Dendritic cell treated with granulocyte-macrophage colony-stimulating factor and Interleukin-4, amounts not matched to agents 40 ng/mL and 50 ng/mL, for 4 days (primary cell): ENCODE measurements at regions of chr6 and their contacts with region 1.

Region 1: GRCh38 chr6:26363882-26364701 is 906 bp upstream of the BTN3A2 start:
- H3K4me3 Mint-ChIP-seq: peak overlapping the region; percentile 5
- H3K27ac Mint-ChIP-seq: no peak overlapping the region
- H3K4me1 Mint-ChIP-seq: peaks cover 15% of the 10 kb centered on the region
- H3K27me3 Mint-ChIP-seq: no peaks in the 10 kb centered on the region

Region 2: DNA sequence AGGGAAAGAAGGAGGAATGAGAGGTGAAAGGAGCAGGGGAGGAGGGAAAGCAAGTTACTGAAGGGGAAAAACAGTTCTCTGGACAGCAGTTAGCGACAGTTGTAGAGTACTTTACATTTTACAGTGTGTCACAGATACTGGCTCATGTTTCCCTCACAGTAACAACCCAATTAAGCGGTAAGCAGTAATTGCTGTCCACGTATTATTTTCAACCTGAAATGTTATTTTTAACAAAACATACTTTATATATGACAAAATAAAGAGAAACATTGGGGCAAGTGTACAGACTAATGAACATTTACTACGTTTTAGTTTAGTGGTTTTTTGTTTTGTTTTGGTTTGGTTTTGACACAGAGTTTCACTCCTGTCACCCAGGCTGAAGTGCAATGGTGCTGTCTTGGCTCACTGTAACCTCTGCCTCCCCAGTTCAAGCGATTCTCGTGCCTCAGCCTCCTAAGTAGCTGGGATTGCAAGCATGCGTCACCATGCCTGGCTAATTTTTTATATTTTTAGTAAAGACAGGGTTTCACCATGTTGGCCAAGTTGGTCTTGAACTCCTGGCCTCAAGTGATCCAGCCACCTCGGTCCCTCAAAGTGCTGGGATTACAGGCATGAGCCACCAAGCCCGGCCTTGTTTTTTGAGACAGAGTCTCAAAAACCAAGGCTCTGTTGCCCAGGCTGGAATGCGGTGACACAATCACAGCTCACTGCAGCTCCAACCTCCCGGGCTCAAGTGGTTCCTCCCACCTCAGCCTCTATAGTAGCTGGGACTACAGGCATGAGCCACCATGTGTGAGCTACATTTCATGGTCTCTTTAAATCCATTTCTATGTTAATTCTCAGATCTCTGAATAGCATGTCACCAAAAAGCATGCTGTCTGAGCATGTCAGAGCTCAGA is 21.7 kb before region 1 on chr6:
- intact Hi-C with region 1: no loop called
- H3K4me3 Mint-ChIP-seq: no peak overlapping the region
- H3K27ac Mint-ChIP-seq: peak overlapping the region; percentile 5
- H3K4me1 Mint-ChIP-seq: peaks cover 20% of the 10 kb centered on the region
- H3K27me3 Mint-ChIP-seq: peaks cover 14% of the 10 kb centered on the region

Region 3: GRCh38 chr6:26383624-26384417 is 19.7 kb after region 1 on chr6:
- intact Hi-C with region 1: loop called (anchors 2 kb)
- H3K4me3 Mint-ChIP-seq: peak overlapping the region; percentile 94
- H3K27ac Mint-ChIP-seq: peak overlapping the region; percentile 93
- H3K4me1 Mint-ChIP-seq: peaks cover 67% of the 10 kb centered on the region
- H3K27me3 Mint-ChIP-seq: no peaks in the 10 kb centered on the region

Region 4: DNA sequence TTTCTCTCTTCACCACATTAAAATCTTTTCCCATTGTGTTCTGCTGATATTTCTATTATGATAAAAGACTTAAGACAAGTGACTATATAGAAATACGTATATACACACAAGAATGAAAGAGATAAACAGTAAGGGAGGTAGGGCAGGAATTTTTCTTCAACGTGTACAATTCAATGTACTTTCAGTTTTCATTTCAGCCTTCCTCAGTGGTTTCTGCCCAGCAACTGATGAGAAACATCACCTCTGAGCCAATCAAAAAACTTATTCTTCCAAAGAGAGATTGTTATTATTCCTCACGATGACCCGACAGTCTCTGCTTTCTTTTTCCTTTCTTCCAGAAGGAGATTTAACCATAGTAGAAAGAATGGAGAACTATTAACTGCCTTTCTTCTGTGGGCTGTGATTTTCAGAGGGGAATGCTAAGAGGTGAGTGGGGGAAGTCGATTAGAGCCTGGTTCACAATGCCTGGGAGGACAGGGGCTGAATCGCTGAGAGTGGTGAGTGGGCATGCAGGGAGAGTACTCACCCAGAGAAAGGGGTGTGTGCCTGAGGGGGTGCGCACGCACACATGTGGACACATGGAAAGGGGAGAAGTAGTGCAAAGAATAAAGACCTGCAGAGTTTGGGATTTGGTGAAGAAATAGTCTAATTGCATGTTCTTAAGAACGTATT is 38.0 kb after region 1 on chr6 and contains the start of gene BTN3A1:
- intact Hi-C with region 1: loop called (anchors 2 kb)
- H3K4me3 Mint-ChIP-seq: peak within 1 kb of the TSS; percentile 84
- H3K27ac Mint-ChIP-seq: peak within 1 kb of the TSS; percentile 85
- H3K4me1 Mint-ChIP-seq: peaks cover 67% of the 10 kb centered on the region
- H3K27me3 Mint-ChIP-seq: no peaks in the 10 kb centered on the region

Region 5: GRCh38 chr6:26457806-26458688 is 94.0 kb after region 1 on chr6 and contains the start of gene BTN2A1:
- intact Hi-C with region 1: loop called (anchors 10 kb)
- H3K4me3 Mint-ChIP-seq: peak within 1 kb of the TSS; percentile 99
- H3K27ac Mint-ChIP-seq: peak within 1 kb of the TSS; percentile 98
- H3K4me1 Mint-ChIP-seq: peaks cover 77% of the 10 kb centered on the region
- H3K27me3 Mint-ChIP-seq: no peaks in the 10 kb centered on the region

Region 6: GRCh38 chr6:26613689-26614683 is 249.9 kb after region 1 on chr6:
- intact Hi-C with region 1: no loop called
- H3K4me3 Mint-ChIP-seq: peak overlapping the region; percentile 71
- H3K27ac Mint-ChIP-seq: peak overlapping the region; percentile 65
- H3K4me1 Mint-ChIP-seq: peaks cover 18% of the 10 kb centered on the region
- H3K27me3 Mint-ChIP-seq: peaks cover 69% of the 10 kb centered on the region